ENCODE measurements at regions of chr5 and their contacts with region 1.

Region 1: GRCh38 chr5:57298295-57298984 is 124.6 kb downstream of the GPBP1 start:
- DNase-seq: peak; percentile 89
- H3K4me3 ChIP-seq: peak overlapping the region in 1 of 4 donors; percentile 19
- H3K27ac ChIP-seq: peak overlapping the region in 2 of 4 donors; percentile 2 to 48
- H3K4me1 ChIP-seq: peaks cover 0 to 5% (median 2%) of the 10 kb centered on the region in 4 donors
- H3K27me3 ChIP-seq: no peaks in the 10 kb centered on the region
- CTCF ChIP-seq: peak; percentile 37 to 75 (median 74)
- EP300 ChIP-seq: no peak
- POLR2A ChIP-seq: no peak

Region 2: DNA sequence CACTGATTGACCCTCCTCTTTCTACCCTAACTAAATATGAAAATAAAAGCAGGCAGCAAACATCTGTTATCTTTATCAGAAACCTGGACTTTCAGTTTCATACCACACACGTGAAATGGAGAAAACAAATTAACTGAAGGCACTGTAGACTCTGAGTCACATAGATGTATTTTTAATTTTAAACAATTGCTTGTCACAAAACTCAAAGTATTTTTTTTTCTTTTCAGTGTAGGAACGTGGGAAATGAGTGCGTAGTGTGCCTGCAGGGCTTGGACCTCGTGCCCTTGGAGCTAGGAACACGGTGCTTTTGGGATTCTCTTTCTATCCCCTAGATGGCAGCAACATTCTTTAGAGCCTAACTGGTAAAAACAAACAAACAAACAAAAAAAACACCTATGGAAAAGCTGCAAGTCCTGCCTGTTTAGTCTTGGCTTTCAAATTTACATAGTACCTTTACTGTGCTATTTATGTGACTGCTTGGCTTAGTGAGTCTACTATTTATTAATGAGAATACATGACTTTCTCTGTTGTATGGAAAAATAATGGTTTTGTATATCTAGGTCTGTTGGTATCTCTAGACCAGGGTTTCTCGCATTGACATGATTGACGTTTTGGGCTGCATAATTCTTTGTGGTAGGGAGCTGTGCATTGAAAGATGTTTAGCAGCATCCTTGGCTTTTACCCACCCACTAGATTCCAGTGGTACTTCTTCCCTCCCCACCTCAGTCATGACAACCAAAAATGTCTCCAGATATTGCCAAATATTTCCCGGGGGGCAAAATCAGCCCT is 201.0 kb after region 1 on chr5:
- intact Hi-C with region 1: loop called (anchors 5 kb)
- DNase-seq: no peak
- H3K4me3 ChIP-seq: peak overlapping the region in 2 of 4 donors; percentile 11 to 15
- H3K27ac ChIP-seq: no peak overlapping the region
- H3K4me1 ChIP-seq: peaks cover 0 to 4% (median 0%) of the 10 kb centered on the region in 4 donors
- H3K27me3 ChIP-seq: no peaks in the 10 kb centered on the region
- CTCF ChIP-seq: peak in 2 of 4 experiments; percentile 11 to 40
- EP300 ChIP-seq: no peak
- POLR2A ChIP-seq: no peak

Region 3: GRCh38 chr5:57779383-57780223 is 481.2 kb after region 1 on chr5:
- intact Hi-C with region 1: loop called (anchors 2 kb)
- DNase-seq: no peak
- H3K4me3 ChIP-seq: no peak overlapping the region
- H3K27ac ChIP-seq: peak overlapping the region in 2 of 4 donors; percentile 9 to 23
- H3K4me1 ChIP-seq: peaks cover 0 to 8% (median 6%) of the 10 kb centered on the region in 4 donors
- H3K27me3 ChIP-seq: no peaks in the 10 kb centered on the region
- CTCF ChIP-seq: peak; percentile 22 to 55 (median 42)
- EP300 ChIP-seq: no peak
- POLR2A ChIP-seq: no peak

Measured in sigmoid colon (tissue), 7 donors.